Right ventricle myocardium inferior (tissue), 1 donor: ENCODE measurements at regions of chr17 and their contacts with region 1.

Region 1: GRCh38 chr17:57892146-57892828 is 42.4 kb upstream of the MRPS23 start:
- DNase-seq: peak; percentile 93
- ATAC-seq: peak; percentile 49

Region 2: GRCh38 chr17:57849874-57850754 is 42.2 kb before region 1 on chr17 and contains the start of gene MRPS23:
- intact Hi-C with region 1: loop called (anchors 2 kb)
- DNase-seq: peak; percentile 99
- ATAC-seq: peak; percentile 89
- total RNA-seq, gene MRPS23: 86.7 TPM

Region 3: DNA sequence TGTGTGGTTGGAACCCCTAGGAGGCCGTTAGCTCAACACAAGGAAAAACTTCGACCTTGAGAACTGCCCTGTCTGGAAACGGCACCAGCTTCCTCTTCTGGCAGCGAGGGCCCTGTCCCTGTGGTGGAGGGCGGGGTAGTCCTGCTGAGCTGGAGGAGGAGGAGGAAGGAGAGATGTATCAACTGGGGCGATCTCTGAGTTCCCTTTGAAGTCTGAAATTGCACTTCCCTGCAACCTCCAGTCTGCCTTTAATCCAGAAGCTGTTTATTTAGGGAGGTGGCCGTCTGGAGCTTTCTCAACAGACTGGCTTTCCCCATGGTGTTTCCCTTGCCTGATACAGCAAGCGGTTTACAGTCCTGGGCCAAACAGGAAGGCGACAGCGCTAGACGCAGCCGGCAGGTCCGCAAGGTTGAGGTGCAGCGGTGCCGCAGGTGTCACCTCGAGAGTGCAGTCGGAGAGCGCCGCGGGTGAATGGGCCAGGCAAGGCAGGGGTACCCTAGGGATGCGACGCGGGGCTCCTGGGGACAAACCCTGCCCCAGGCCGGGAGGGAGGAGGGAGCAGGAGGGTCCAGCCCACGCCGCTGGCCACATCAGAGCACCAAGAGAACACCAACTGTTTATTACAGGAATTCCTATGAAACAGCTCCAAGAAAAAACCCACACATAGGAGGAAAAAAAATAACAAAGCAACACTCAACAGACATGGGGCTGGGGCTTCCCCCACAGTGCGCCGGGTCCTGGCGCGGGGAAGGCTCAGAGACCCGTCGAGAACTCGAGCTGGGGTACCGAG is 31.1 kb before region 1 on chr17:
- intact Hi-C with region 1: loop called (anchors 2 kb)
- DNase-seq: peak; percentile 85
- ATAC-seq: peak; percentile 55

Region 4: GRCh38 chr17:57916925-57917858 is 24.9 kb after region 1 on chr17:
- intact Hi-C with region 1: loop called (anchors 2 kb)
- DNase-seq: no peak
- ATAC-seq: peak; percentile 72

Region 5: DNA sequence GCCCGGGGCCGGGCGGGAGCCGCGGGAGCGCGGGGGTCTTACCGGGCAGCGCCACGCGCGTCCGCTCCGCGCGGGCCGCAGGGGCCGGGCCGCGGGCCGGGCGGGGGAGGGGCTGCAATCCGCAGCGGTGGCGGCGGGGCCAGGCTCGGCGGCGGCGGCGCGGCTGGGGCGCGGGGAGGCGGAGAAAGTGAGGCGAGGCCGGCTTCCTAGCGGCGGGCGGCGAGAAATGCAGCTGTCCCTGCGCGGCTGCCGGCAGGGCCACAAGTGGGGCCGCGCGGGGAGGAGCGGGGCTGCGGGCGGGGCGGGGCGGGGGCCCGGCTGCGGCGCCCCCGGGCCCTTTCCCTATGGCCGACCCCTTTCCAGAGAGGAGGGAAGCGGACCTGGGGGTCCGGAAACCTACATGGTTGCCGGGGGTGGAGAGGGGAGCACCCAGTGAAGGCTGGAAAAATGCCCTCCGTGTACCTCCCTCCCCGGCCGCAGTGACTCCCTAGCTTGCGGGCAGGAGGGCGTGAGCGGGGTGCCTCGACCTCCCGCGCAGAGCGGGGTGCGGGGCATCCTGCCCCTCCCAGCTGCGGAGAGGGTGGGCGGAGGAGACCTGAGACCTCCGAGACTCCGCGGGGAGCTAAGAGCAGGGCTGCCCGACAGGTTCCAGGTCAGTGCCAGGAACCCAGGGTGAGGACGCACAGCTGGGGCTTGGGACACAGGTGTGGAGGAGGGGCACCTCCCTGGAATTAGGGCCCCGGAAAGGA is 63.1 kb after region 1 on chr17 and contains the start of gene CUEDC1:
- intact Hi-C with region 1: loop called (anchors 1 kb)
- DNase-seq: peak; percentile 94
- ATAC-seq: peak; percentile 75
- total RNA-seq, gene CUEDC1: 49.1 TPM

Region 6: DNA sequence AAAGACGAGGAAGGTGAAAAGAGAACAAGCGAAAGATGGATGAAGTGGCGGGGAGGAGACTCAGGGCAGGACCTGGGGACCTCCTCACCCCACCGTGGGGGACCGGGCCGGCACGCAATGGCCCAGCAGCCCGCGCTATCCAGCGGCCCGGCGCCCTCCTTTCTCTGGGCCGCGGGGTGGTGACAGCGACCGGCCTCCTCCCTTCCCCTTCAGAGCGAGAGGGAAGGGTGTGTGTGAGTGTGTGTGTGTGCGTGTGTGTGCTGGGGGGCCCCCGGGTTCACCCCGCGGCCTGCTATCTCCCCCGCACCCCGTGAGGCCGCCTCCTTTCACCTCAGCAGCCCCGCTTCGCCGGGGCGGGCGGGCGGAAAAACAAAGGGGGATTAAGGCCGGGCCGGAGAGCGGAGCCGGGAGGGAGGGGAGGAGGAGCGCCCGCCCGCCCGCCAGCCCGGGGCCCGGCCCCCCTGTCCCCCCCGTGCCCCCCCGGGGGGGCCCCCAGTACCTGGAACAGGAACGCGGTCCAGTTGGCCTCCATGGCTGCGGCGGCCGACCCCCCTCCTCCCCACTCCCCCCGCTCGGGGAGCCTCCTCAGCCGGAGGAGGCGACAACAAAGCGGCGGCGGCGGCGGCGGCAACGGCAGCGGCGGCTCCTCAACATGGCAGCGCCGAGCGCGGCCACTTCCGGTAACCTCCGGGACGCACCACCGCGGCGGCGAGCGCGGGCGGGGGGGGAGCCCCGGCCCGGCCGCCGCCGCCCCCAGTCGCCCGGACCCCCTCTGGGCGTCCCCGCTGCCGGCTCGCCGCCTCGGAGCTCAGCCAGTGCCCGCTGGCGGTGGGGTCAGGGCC is 95.5 kb after region 1 on chr17 and contains the start of gene VEZF1:
- intact Hi-C with region 1: loop called (anchors 1 kb)
- DNase-seq: peak; percentile 94
- ATAC-seq: peak; percentile 71
- total RNA-seq, gene VEZF1: 74.2 TPM